Head of caudate nucleus (tissue), 42 donors: ENCODE measurements at regions of chr2 and their contacts with region 1.

Region 1: DNA sequence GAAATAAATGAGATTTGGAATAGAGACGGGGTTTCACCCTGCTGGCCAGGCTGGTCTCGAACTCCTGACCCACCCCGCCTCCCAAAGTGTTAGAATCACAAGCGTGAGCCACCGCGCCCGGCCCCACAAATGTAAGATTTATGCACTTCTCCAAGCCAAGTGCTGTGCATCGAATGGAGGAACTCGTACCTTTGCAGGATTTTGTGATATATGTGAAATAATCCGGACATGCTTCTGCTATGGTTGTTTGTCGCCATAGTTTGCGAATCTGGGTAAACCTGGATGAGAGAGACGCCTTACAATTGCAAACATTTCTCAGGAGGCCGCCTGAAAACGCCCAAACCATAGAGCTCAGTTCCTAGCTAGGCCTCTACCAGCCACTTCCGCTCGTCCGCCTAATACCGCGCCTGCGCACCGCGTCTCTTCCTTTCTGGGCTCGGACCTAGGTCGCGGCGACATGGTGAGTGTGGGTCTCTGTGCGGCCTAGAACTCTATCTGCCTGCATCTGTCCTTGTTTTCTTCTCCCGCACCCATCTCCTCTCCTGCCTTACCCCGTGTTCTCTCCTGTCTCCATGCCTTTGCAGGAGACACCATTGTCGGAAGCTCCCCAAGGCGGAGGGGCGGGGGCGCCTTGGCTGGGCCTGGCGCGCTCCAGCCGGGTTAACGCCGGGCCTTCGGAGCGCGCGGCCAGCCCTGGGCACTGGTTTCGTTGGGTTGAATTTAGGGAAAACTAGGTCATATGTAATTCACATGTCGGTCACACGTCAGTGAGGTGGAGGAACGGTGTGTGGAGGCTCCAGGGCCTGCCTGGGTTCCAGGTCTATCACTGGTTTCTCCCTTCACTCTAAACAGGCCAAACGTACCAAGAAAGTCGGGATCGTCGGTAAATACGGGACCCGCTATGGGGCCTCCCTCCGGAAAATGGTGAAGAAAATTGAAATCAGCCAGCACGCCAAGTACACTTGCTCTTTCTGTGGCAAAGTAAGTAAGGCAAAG is at the start of gene RPL37A:
- DNase-seq: peak; percentile 87 to 97 (median 94)

Region 2: GRCh38 chr2:216424274-216424673 is 74.4 kb before region 1 on chr2:
- intact Hi-C with region 1: loop called (anchors 5 kb)
- DNase-seq: no peak